Activated CD4-positive, alpha-beta T cell treated with anti-CD3 and anti-CD28 coated beads for 36 hours (primary cell): ENCODE measurements at regions of chr19 and their contacts with region 1.

Region 1: DNA sequence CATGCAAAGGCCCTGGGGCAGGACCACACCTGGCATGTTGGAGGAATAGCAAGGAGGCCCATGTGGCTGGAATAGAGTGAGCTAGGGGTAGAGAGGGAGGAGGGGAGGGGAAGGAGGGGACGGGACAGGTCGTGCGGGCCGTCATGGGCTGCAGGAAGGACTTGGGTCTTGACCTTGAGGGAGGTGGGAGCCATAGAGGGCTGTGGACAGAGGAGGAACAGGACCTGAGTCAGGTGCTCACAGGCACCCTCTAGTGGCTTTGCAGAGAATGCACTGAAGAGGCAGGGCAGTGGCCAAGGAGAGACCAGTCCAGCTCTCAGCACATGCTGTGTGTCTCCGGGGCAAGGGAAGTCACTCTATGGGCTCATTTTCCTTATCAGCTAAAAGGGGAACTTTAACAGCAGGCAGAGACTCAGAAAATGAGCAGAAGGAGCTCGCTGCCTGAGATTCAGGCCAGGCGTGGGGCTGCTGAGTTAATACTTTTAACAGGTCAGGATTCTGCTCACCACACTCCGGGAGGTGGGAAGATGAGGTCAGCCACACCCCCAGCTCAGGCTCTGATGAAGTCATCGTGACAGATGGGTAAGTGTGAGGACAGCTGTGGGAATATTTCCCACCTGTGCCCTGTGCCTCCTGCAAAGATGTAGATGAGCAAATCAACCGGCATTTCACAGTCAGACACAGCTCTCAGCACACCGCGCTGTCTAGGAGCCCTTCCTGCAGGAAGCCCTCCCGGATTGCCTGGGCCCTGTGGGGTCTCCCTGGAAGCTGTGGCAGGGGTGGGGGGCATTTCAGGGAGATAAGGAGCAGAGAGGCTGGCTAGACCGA is 6.0 kb upstream of the TNFAIP8L1 start:
- DNase-seq: peak; percentile 70
- ATAC-seq: peak; percentile 45
- H3K4me3 Mint-ChIP-seq: no peak overlapping the region
- H3K27ac Mint-ChIP-seq: no peak overlapping the region
- H3K4me1 Mint-ChIP-seq: peaks cover 14% of the 10 kb centered on the region
- H3K27me3 Mint-ChIP-seq: no peaks in the 10 kb centered on the region

Region 2: DNA sequence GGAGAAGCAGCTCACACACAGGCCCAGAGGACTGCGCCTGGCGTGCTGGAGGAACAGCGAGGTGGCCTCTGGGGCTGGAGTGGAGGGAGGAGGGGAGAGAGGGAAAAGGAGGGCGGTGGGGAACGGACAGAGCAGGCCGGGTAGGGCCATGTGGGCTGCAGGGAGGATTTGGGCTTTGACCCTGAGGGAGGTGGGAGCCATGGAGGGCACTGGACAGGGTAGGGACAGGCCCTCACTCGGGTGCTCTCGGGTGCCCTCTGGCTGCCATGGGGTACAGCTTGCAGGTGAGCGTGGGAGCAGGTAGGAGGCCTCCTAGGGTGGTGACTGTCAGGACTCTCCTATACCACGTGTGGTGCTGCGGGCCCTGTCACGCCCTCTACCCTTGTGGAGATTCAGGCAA is 137.9 kb before region 1 on chr19:
- CTCF ChIA-PET with region 1: no interaction called
- POLR2A ChIA-PET with region 1: no interaction called
- intact Hi-C with region 1: no loop called
- DNase-seq: no peak
- ATAC-seq: no peak
- H3K4me3 Mint-ChIP-seq: no peak overlapping the region
- H3K27ac Mint-ChIP-seq: no peak overlapping the region
- H3K4me1 Mint-ChIP-seq: no peaks in the 10 kb centered on the region
- H3K27me3 Mint-ChIP-seq: no peaks in the 10 kb centered on the region

Region 3: DNA sequence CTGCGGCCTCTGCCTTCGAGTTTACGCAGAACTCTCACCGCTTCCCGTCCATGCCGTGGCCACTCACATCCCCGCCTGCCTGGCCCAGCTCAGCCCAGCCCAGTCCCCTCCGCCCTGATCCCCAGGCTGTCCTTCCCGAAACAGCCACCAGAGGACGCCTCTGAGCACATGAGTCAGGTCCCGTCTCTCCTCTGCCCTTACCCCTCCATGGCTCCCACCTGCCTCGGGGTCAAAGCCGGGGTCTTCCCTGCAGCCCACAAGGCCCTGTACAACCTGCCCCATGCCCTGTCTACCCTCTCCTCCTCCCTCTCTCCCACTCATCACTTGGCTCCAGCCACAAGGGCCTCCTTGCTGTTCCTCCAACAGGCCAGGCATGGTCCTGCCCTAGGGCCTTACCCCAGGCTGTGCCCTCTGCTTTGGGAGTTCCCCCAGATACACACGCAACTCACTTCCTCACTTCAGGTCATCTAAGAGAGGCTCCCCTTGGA is 65.7 kb before region 1 on chr19:
- CTCF ChIA-PET with region 1: interaction called, 28 read pairs
- POLR2A ChIA-PET with region 1: no interaction called
- intact Hi-C with region 1: loop called in 1 of 2 experiments (anchors 1 kb)
- DNase-seq: peak; percentile 85
- ATAC-seq: peak; percentile 94
- H3K4me3 Mint-ChIP-seq: no peak overlapping the region
- H3K27ac Mint-ChIP-seq: no peak overlapping the region
- H3K4me1 Mint-ChIP-seq: no peaks in the 10 kb centered on the region
- H3K27me3 Mint-ChIP-seq: peaks cover 4% of the 10 kb centered on the region